Naive thymus-derived CD4-positive, alpha-beta T cell (primary cell): ENCODE measurements at regions of chr13 and their contacts with region 1.

Region 1: DNA sequence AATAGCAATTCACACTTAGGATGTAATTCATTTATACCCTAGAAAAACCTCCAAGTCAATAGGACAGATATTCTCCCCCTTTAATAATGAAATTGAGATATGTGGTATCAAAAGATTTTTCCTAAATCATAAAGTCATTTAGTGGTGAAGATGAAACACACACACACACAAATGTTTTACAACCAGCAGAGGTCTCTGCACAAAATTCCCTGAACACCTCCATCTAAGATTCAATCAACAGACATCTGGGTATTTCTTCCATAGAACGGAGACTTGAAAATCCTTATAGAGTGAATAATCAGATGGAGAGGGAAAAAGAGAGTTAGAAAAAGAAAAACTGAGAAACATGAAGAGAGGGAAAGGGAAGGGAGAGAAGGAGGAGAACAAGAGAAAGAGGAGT is 52.8 kb downstream of the MYCBP2 start:
- DNase-seq: peak in 1 of 9 donors; percentile 6
- ATAC-seq: no peak
- H3K4me3 ChIP-seq: no peak overlapping the region
- H3K4me3 Mint-ChIP-seq: no peak overlapping the region
- H3K27ac ChIP-seq: no peak overlapping the region
- H3K27ac Mint-ChIP-seq: peak overlapping the region in 2 of 9 donors; percentile 19 to 73
- H3K4me1 ChIP-seq: no peaks in the 10 kb centered on the region
- H3K4me1 Mint-ChIP-seq: peaks cover 0 to 36% (median 18%) of the 10 kb centered on the region in 7 donors
- H3K27me3 ChIP-seq: no peaks in the 10 kb centered on the region
- H3K27me3 Mint-ChIP-seq: no peaks in the 10 kb centered on the region

Region 2: DNA sequence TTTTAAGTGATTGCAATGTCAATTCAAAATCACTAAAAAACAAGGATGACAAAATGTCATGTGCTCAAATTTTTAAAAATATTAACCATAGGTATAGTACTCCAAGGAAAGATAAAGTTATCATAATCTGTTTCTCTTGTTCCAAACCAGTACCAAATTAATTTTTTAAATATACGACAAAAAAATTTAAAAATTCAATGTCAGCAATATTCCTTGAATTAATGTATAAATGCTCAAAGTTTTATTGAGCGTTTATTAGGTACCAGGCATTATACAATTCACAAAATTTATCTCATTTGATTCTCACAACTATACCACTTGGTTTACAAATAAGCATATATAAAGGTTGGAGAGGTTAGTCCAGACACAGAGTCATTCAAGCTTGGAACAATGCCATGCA is 11.9 kb before region 1 on chr13:
- CTCF ChIA-PET with region 1: no interaction called
- POLR2A ChIA-PET with region 1: no interaction called
- intact Hi-C with region 1: loop called in 1 of 2 experiments (anchors 1 kb)
- DNase-seq: no peak
- ATAC-seq: no peak
- H3K4me3 ChIP-seq: no peak overlapping the region
- H3K4me3 Mint-ChIP-seq: no peak overlapping the region
- H3K27ac ChIP-seq: no peak overlapping the region
- H3K27ac Mint-ChIP-seq: no peak overlapping the region
- H3K4me1 ChIP-seq: no peaks in the 10 kb centered on the region
- H3K4me1 Mint-ChIP-seq: peaks cover 0 to 12% (median 0%) of the 10 kb centered on the region in 7 donors
- H3K27me3 ChIP-seq: no peaks in the 10 kb centered on the region
- H3K27me3 Mint-ChIP-seq: no peaks in the 10 kb centered on the region

Region 3: GRCh38 chr13:77285098-77285497 is 11.0 kb after region 1 on chr13:
- CTCF ChIA-PET with region 1: no interaction called
- POLR2A ChIA-PET with region 1: no interaction called
- intact Hi-C with region 1: loop called in 1 of 2 experiments (anchors 1 kb)
- DNase-seq: no peak
- ATAC-seq: no peak
- H3K4me3 ChIP-seq: no peak overlapping the region
- H3K4me3 Mint-ChIP-seq: no peak overlapping the region
- H3K27ac ChIP-seq: no peak overlapping the region
- H3K27ac Mint-ChIP-seq: peak overlapping the region in 1 of 9 donors; percentile 35
- H3K4me1 ChIP-seq: no peaks in the 10 kb centered on the region
- H3K4me1 Mint-ChIP-seq: peaks cover 6 to 49% (median 30%) of the 10 kb centered on the region in 7 donors
- H3K27me3 ChIP-seq: no peaks in the 10 kb centered on the region
- H3K27me3 Mint-ChIP-seq: no peaks in the 10 kb centered on the region